ENCODE measurements at regions of chr1 and their contacts with region 1.

Region 1: GRCh38 chr1:212814537-212815334 is 23.0 kb downstream of the TATDN3 start:
- DNase-seq: peak in 16 of 42 donors; percentile 15 to 75 (median 44)

Region 2: GRCh38 chr1:212990276-212990675 is 175.5 kb after region 1 on chr1:
- intact Hi-C with region 1: loop called (anchors 10 kb)
- DNase-seq: no peak

Region 3: DNA sequence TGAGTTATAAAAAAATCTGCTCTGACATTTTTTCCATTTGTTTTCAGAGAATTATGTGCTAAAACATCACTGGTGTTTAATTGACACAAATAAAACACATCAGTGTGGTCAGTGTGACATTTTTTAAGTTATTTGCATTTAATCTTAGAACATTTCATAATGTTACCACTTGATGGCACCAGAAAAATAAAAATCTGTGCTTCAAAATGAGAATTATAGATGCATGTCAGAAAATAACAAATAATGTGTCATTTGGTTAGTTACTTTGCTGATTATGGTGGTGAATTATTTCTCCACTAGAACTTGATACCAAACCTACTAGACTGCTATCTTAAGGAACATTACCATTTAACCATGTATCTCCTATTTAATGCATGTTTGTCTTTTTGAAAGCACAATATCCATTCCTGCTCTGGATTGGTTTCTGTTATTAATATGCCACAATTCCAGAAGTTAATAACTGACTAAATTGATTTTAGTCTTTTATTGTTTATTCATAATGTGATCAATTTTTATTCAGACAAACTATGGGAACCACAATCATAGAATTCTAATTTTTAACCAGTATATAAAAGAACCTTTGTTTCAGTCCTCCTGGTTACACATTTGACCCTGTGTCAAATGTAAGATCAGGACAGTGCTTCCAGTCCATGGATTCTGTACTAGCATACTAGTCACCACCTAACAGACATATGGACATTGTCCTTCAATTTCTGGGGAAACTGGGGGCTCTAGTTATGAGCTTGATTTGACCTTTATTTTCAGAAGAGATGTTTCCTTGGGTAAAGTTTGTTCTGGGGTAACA is 317.3 kb after region 1 on chr1:
- intact Hi-C with region 1: no loop called
- DNase-seq: no peak

Measured in head of caudate nucleus (tissue), 42 donors.